CD4-positive, alpha-beta memory T cell (primary cell): ENCODE measurements at regions of chr9 and their contacts with region 1.

Region 1: DNA sequence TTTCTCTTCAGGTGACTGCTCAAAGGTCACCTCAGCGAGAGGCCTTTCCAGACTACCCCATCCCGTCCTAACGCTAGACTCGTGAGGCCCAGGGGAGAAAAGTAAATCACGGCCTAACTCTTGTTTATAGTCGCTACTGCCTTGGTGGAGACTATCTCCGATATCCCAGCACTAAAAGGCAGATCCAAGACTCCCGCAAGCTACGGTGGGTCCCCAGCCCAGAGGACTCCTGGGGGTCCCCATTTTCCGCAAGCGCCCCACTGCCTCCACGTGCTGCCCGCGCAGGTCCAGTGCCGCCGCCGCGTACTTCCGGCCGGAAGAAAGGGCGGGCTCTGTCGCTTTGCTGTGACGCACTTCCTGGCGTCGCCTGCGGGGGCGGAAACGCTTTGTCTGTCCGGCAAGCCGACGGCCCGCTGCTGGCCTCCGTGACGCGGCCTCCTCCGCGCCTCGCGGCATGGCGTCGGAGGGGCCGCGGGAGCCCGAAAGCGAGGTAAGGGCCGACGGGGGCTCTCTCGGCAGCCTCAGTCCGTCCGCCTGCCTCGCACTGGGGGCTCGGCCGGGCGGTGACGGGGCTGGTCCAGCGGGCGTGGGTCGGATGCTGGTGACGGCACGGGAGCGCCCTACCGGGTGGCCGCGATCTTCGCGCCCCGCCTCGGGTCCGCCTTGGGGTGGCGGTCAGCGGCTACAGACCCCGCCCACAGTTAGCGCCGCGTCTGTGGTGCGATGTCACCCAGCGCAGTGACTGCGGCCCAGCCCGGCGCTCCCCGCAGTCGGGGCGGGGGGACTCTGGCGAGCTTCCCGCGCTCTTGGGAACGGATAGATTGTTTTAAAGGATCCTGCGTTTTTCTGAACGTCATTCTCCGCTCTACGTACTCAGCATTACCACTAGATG is at the start of gene SECISBP2:
- DNase-seq: peak; percentile 94 to 97 (median 94)
- H3K4me3 ChIP-seq: peak within 1 kb of the TSS; percentile 67 to 76
- H3K4me3 Mint-ChIP-seq: peak within 1 kb of the TSS; percentile 83 to 94 (median 92)
- H3K27ac ChIP-seq: peak within 1 kb of the TSS; percentile 100
- H3K27ac Mint-ChIP-seq: peak within 1 kb of the TSS; percentile 91 to 99 (median 98)
- H3K4me1 ChIP-seq: peaks cover 55% of the 10 kb centered on the region
- H3K4me1 Mint-ChIP-seq: peaks cover 38 to 69% (median 54%) of the 10 kb centered on the region in 4 donors
- H3K27me3 ChIP-seq: no peaks in the 10 kb centered on the region
- H3K27me3 Mint-ChIP-seq: peaks cover 0 to under 1% of the 10 kb centered on the region in 2 donors
- total RNA-seq, gene SECISBP2: 96.5 to 112 TPM

Region 2: GRCh38 chr9:89375191-89375760 is 56.9 kb after region 1 on chr9:
- CTCF ChIA-PET with region 1: no interaction called
- POLR2A ChIA-PET with region 1: no interaction called
- intact Hi-C with region 1: loop called (anchors 2 kb)
- DNase-seq: peak in 2 of 5 donors; percentile 31 to 41
- H3K4me3 ChIP-seq: no peak overlapping the region
- H3K4me3 Mint-ChIP-seq: peak overlapping the region in 1 of 8 donors; percentile 29
- H3K27ac ChIP-seq: peak overlapping the region; percentile 27
- H3K27ac Mint-ChIP-seq: peak overlapping the region; percentile 73 to 92 (median 82)
- H3K4me1 ChIP-seq: peaks cover 25% of the 10 kb centered on the region
- H3K4me1 Mint-ChIP-seq: peaks cover 21 to 48% (median 37%) of the 10 kb centered on the region in 4 donors
- H3K27me3 ChIP-seq: no peaks in the 10 kb centered on the region
- H3K27me3 Mint-ChIP-seq: no peaks in the 10 kb centered on the region